GM12878 (cell line): ENCODE measurements at regions of chr5 and their contacts with region 1.

Region 1: DNA sequence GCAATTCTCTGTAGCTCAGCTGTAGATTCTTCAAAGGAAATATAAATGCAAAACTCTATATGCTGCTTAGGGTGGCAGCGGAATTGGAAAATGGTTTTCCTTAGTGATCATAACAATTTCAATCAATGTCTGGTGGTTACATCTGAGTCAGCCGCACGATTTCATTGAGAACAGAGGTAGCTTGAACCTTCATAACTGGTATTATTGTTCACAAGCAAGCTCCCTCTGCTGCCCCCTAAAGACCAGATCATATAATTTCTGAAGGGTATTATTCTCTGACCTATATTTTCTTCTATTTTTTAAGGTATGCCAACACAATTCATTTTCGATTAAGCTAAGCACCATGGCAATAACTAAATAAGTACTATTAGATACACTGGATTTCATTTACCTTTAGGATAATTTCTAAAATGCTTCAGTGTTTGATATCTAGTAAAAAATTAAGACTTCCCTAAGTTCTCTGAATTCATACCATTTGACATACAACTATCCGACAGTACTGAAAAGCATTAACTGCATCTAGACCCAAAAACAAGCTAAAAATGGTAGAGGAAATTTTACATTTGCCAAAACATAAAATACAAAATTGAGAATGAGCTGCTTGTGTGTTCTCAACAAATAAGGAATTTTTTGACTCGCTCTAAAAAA is 181.1 kb upstream of the SPEF2 start:
- DNase-seq: no peak
- ATAC-seq: peak; percentile 86
- H3K4me3 ChIP-seq: no peak overlapping the region
- H3K27ac ChIP-seq: no peak overlapping the region
- H3K4me1 ChIP-seq: no peaks in the 10 kb centered on the region
- H3K27me3 ChIP-seq: no peaks in the 10 kb centered on the region
- CTCF ChIP-seq: peak; percentile 42 to 50 (median 45); a peak in 4 of 6 replicates
- EP300 ChIP-seq: no peak
- POLR2A ChIP-seq: no peak
- RAD21 ChIP-seq: peak; percentile 41

Region 2: DNA sequence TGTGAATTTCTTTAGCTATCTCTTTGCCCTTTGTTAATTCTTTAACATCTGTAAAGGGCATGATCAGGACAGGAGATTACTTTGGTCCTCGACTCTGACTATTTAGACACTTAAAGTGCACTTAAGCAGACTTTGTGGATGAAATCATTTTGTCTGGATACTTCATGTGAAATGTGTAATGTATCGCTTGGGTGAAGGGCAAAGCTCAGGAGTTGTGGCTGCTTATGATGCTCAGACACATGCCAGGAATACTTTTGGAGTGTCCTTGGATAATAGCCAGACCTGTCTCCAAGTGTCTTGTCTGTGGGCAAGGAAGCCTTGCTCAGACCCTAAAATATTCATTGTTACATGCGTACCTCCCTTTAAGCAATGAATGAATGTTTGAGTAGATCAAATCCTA is 692.7 kb before region 1 on chr5:
- CTCF ChIA-PET with region 1: no interaction called
- POLR2A ChIA-PET with region 1: no interaction called
- RAD21 ChIA-PET with region 1: no interaction called
- SMC1A ChIA-PET with region 1: no interaction called
- in situ Hi-C with region 1: no loop called
- intact Hi-C with region 1: no loop called
- DNase-seq: no peak
- ATAC-seq: no peak
- H3K4me3 ChIP-seq: no peak overlapping the region
- H3K27ac ChIP-seq: no peak overlapping the region
- H3K4me1 ChIP-seq: no peaks in the 10 kb centered on the region
- H3K27me3 ChIP-seq: no peaks in the 10 kb centered on the region
- CTCF ChIP-seq: no peak
- EP300 ChIP-seq: no peak
- POLR2A ChIP-seq: no peak
- RAD21 ChIP-seq: no peak

Region 3: DNA sequence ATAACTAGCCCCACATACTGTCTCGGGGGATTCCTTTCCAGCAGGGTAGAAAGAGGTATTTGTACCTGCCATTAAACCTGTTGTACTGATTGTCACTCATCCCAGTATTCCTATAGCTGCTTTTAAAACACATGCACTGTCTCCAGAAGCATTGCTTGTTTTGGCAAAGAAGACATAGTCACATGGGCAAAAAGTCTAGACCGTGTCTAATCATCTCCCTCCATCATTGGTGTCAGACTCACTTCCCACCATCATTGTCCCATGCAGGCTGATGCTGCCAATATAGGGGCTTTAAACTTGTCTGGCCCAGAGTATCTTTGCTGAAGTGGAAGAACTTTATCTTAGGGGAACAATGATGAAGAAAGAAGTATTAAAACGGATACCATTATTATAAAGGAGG is 494.6 kb before region 1 on chr5:
- CTCF ChIA-PET with region 1: no interaction called
- POLR2A ChIA-PET with region 1: no interaction called
- RAD21 ChIA-PET with region 1: no interaction called
- SMC1A ChIA-PET with region 1: no interaction called
- in situ Hi-C with region 1: no loop called
- intact Hi-C with region 1: no loop called
- DNase-seq: no peak
- ATAC-seq: no peak
- H3K4me3 ChIP-seq: no peak overlapping the region
- H3K27ac ChIP-seq: no peak overlapping the region
- H3K4me1 ChIP-seq: no peaks in the 10 kb centered on the region
- H3K27me3 ChIP-seq: no peaks in the 10 kb centered on the region
- CTCF ChIP-seq: no peak
- EP300 ChIP-seq: no peak
- POLR2A ChIP-seq: no peak
- RAD21 ChIP-seq: no peak

Region 4: GRCh38 chr5:35202319-35203111 is 234.0 kb before region 1 on chr5:
- CTCF ChIA-PET with region 1: interaction called, 9 read pairs
- POLR2A ChIA-PET with region 1: no interaction called
- RAD21 ChIA-PET with region 1: interaction called, 3 read pairs
- SMC1A ChIA-PET with region 1: interaction called, 11 read pairs
- in situ Hi-C with region 1: no loop called
- intact Hi-C with region 1: no loop called
- DNase-seq: no peak
- ATAC-seq: peak; percentile 88
- H3K4me3 ChIP-seq: no peak overlapping the region
- H3K27ac ChIP-seq: no peak overlapping the region
- H3K4me1 ChIP-seq: no peaks in the 10 kb centered on the region
- H3K27me3 ChIP-seq: no peaks in the 10 kb centered on the region
- CTCF ChIP-seq: peak; percentile 35 to 48 (median 45); a peak in 5 of 6 replicates
- EP300 ChIP-seq: no peak
- POLR2A ChIP-seq: no peak
- RAD21 ChIP-seq: peak; percentile 44

Region 5: GRCh38 chr5:35230038-35230631 is 206.4 kb before region 1 on chr5 and contains the start of gene PRLR:
- CTCF ChIA-PET with region 1: interaction called, 112 read pairs
- POLR2A ChIA-PET with region 1: interaction called, 3 read pairs
- RAD21 ChIA-PET with region 1: interaction called, 83 read pairs
- SMC1A ChIA-PET with region 1: interaction called, 90 read pairs
- in situ Hi-C with region 1: no loop called
- intact Hi-C with region 1: loop called (anchors 1 kb)
- DNase-seq: no peak
- ATAC-seq: peak; percentile 38
- H3K4me3 ChIP-seq: peak within 1 kb of the TSS; percentile 64
- H3K27ac ChIP-seq: peak within 1 kb of the TSS; percentile 25; the same call in 1 of the 2 replicates
- H3K4me1 ChIP-seq: no peaks in the 10 kb centered on the region
- H3K27me3 ChIP-seq: peaks cover 0 to 8% of the 10 kb centered on the region in 2 experiments; a peak in 2 of 4 replicates
- CTCF ChIP-seq: no peak
- EP300 ChIP-seq: no peak
- POLR2A ChIP-seq: no peak
- RAD21 ChIP-seq: no peak
- polyA plus RNA-seq, gene PRLR: 0.04 to 0.85 TPM

Region 6: DNA sequence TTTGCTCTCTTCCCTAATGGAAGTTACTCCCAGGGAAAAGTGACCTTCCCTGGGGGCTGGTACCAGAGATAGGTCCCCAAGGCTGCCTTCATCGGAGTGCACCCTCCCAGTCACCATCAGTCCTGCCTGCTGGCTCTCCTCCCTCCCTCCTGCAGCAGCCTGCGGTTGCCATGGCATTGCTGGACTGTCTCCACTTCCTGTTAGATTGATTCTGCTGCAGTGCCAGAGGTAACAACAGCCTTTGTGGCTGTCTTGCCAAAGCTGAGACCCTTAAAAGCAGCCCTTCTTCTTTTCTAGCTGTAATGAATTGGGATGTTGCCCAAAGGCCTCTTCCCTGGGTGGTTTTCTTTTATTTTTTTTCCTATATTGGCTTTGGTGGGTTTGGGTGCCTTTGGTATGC is 128.1 kb before region 1 on chr5:
- CTCF ChIA-PET with region 1: interaction called, 12 read pairs
- POLR2A ChIA-PET with region 1: no interaction called
- RAD21 ChIA-PET with region 1: interaction called, 10 read pairs
- SMC1A ChIA-PET with region 1: interaction called, 7 read pairs
- in situ Hi-C with region 1: no loop called
- intact Hi-C with region 1: no loop called
- DNase-seq: no peak
- ATAC-seq: peak; percentile 94
- H3K4me3 ChIP-seq: no peak overlapping the region
- H3K27ac ChIP-seq: no peak overlapping the region
- H3K4me1 ChIP-seq: no peaks in the 10 kb centered on the region
- H3K27me3 ChIP-seq: no peaks in the 10 kb centered on the region
- CTCF ChIP-seq: no peak
- EP300 ChIP-seq: no peak
- POLR2A ChIP-seq: no peak
- RAD21 ChIP-seq: no peak

Region 7: GRCh38 chr5:35337340-35338156 is 99.0 kb before region 1 on chr5:
- CTCF ChIA-PET with region 1: interaction called, 14 read pairs
- POLR2A ChIA-PET with region 1: no interaction called
- RAD21 ChIA-PET with region 1: interaction called, 3 read pairs
- SMC1A ChIA-PET with region 1: interaction called, 5 read pairs
- in situ Hi-C with region 1: no loop called
- intact Hi-C with region 1: no loop called
- DNase-seq: no peak
- ATAC-seq: no peak
- H3K4me3 ChIP-seq: no peak overlapping the region
- H3K27ac ChIP-seq: no peak overlapping the region
- H3K4me1 ChIP-seq: no peaks in the 10 kb centered on the region
- H3K27me3 ChIP-seq: no peaks in the 10 kb centered on the region
- CTCF ChIP-seq: no peak
- EP300 ChIP-seq: no peak
- POLR2A ChIP-seq: no peak
- RAD21 ChIP-seq: no peak

Region 8: GRCh38 chr5:35538198-35538931 is 101.8 kb after region 1 on chr5:
- CTCF ChIA-PET with region 1: no interaction called
- POLR2A ChIA-PET with region 1: no interaction called
- RAD21 ChIA-PET with region 1: no interaction called
- SMC1A ChIA-PET with region 1: no interaction called
- in situ Hi-C with region 1: no loop called
- intact Hi-C with region 1: no loop called
- DNase-seq: no peak
- ATAC-seq: peak; percentile 31; the same call in 1 of the 3 replicates
- H3K4me3 ChIP-seq: no peak overlapping the region
- H3K27ac ChIP-seq: no peak overlapping the region
- H3K4me1 ChIP-seq: no peaks in the 10 kb centered on the region
- H3K27me3 ChIP-seq: no peaks in the 10 kb centered on the region
- CTCF ChIP-seq: no peak
- EP300 ChIP-seq: no peak
- POLR2A ChIP-seq: no peak
- RAD21 ChIP-seq: no peak